Activated CD8-positive, alpha-beta T cell treated with anti-CD3 and anti-CD28 coated beads for 36 hours (primary cell): ENCODE measurements at regions of chr19 and their contacts with region 1.

Region 1: GRCh38 chr19:771332-771785 is 20.4 kb downstream of the MISP start:
- DNase-seq: peak; percentile 68
- ATAC-seq: peak; percentile 78
- H3K4me3 Mint-ChIP-seq: no peak overlapping the region
- H3K27ac Mint-ChIP-seq: no peak overlapping the region
- H3K4me1 Mint-ChIP-seq: peaks cover 3% of the 10 kb centered on the region
- H3K27me3 Mint-ChIP-seq: peaks cover 5% of the 10 kb centered on the region
- CTCF ChIP-seq: peak; percentile 60

Region 2: DNA sequence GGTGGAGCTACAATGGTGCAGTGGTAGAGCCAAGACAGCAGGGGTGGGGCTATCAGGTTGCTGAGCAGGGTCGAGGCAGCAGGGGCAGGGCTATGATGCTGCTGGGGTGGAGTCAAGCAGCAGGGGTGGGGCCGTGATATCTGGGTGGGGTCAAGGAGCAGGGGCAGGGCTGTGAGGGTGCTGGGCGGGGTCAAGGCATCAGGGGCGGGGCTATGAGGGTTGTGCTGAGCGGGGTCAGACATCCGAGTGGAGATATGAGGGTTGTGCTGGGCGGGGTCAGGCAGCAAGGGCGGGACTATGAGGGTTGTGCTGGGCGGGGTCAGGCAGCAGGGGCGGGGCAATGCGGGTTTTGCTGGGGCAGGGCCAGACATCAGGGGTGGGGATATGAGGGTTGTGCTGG is 167.0 kb before region 1 on chr19:
- CTCF ChIA-PET with region 1: no interaction called
- POLR2A ChIA-PET with region 1: no interaction called
- intact Hi-C with region 1: no loop called
- DNase-seq: peak; percentile 77
- ATAC-seq: peak; percentile 85
- H3K4me3 Mint-ChIP-seq: no peak overlapping the region
- H3K27ac Mint-ChIP-seq: no peak overlapping the region
- H3K4me1 Mint-ChIP-seq: no peaks in the 10 kb centered on the region
- H3K27me3 Mint-ChIP-seq: no peaks in the 10 kb centered on the region
- CTCF ChIP-seq: no peak

Region 3: GRCh38 chr19:872266-872951 is 101.0 kb after region 1 on chr19:
- CTCF ChIA-PET with region 1: no interaction called
- POLR2A ChIA-PET with region 1: no interaction called
- intact Hi-C with region 1: no loop called
- DNase-seq: peak; percentile 94
- ATAC-seq: peak; percentile 91
- H3K4me3 Mint-ChIP-seq: peak overlapping the region; percentile 54
- H3K27ac Mint-ChIP-seq: peak overlapping the region; percentile 67
- H3K4me1 Mint-ChIP-seq: peaks cover 10% of the 10 kb centered on the region
- H3K27me3 Mint-ChIP-seq: no peaks in the 10 kb centered on the region
- CTCF ChIP-seq: no peak

Region 4: DNA sequence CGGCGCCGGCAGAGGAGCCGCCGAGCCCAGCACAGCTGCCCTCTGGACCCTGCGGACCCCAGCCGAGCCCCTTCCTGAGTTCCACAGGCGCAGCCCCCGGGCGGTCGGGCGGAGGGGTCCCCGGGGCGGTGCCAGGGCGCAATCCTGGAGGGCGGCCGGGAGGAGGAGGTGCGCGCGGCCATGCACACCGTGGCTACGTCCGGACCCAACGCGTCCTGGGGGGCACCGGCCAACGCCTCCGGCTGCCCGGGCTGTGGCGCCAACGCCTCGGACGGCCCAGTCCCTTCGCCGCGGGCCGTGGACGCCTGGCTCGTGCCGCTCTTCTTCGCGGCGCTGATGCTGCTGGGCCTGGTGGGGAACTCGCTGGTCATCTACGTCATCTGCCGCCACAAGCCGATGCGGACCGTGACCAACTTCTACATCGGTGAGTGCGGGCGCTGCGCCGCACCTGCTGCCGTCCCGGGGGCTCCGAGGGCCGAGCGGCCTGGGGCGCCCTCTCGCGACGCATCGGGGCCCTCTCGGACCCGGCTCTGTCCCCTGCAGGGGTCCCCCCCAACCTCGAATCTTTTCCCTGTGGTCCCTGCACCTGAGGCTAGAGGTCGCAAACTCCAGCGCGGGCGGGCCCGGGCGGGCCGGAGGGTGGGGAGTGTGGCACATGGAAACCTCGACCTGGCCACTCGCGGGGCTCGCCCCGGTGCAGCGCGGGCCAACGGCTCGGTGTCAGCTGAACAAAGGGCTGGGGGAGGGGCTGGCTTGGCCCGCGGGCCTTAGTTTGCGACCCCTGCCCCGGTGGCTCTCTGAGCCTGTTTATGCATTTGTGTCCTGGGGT is 146.2 kb after region 1 on chr19 and contains the start of gene KISS1R:
- CTCF ChIA-PET with region 1: interaction called, 12 read pairs
- POLR2A ChIA-PET with region 1: no interaction called
- intact Hi-C with region 1: loop called (anchors 5 kb)
- DNase-seq: peak; percentile 65
- ATAC-seq: peak; percentile 6
- H3K4me3 Mint-ChIP-seq: peak within 1 kb of the TSS; percentile 73
- H3K27ac Mint-ChIP-seq: no peak within 1 kb of the TSS
- H3K4me1 Mint-ChIP-seq: peaks cover 16% of the 10 kb centered on the region
- H3K27me3 Mint-ChIP-seq: peaks cover 2% of the 10 kb centered on the region
- CTCF ChIP-seq: peak; percentile 88
- total RNA-seq, gene KISS1R: 14.0 to 15.5 TPM